Heart left ventricle (tissue), 16 donors: ENCODE measurements at regions of chr1 and their contacts with region 1.

Region 1: DNA sequence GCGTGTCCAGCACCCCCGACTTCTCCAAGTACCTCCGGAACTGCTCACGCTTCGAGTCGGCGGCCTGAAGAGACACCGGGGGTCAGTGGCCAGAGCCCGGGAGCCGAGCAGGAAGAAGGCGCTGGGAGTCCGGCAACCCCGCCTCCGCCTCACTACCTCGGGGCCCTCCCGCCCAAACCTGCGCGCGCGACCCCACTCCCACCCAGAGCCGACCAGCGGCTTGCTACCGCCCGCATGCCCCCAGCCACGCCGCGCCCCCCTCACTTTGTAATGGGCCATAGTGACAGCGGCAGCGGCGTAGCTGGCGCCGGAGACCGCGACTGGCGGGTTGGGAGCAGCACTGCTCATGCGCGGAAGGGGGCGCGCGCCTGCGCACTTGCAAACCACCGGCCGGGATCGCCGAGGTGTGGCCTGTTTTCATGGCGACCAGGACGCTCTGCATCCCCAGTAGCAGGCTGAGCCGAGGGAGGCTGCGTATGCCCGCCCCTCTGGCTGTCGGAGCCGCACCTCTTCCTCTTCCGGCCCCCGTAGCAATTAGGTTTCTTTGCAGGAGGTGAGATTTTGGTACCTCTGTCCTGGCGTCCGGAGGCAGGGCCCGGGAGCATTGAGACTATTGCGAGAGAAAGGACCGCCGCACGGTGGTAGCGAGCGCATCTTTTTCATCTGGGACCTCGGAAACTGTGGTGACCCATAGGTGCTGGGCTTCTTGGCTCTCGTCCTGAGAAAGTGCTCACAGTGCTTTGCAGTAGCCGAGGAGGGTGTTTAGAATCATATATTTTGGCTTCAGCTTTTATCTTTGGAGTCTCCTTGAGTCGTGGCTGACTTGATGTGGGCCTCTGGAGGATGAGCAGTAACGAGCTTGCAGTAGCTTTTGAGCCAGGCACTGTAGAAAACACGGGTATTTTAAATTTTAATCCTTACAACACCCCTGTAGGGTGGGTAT is at the start of gene MYCBP:
- DNase-seq: peak; percentile 96 to 98 (median 97)
- ATAC-seq: peak; percentile 98 to 100 (median 100)
- H3K4me3 ChIP-seq: peak within 1 kb of the TSS; percentile 37 to 96 (median 80)
- H3K27ac ChIP-seq: peak within 1 kb of the TSS; percentile 53 to 80 (median 72)
- H3K4me1 ChIP-seq: peaks cover 0 to 29% (median 21%) of the 10 kb centered on the region in 12 donors
- H3K27me3 ChIP-seq: no peaks in the 10 kb centered on the region
- CTCF ChIP-seq: peak in 5 of 12 donors; percentile 17 to 45 (median 24)
- POLR2A ChIP-seq: peak in 1 of 2 donors; percentile 80
- total RNA-seq, gene MYCBP: 4.8 to 26.2 (median 11.1) TPM

Region 2: GRCh38 chr1:38973659-38974424 is 100.5 kb after region 1 on chr1:
- intact Hi-C with region 1: no loop called
- DNase-seq: peak in 3 of 5 donors; percentile 19 to 35 (median 29)
- ATAC-seq: peak; percentile 28 to 85 (median 74)
- H3K4me3 ChIP-seq: no peak overlapping the region
- H3K27ac ChIP-seq: no peak overlapping the region
- H3K4me1 ChIP-seq: peaks cover 0 to 4% (median 0%) of the 10 kb centered on the region in 12 donors
- H3K27me3 ChIP-seq: no peaks in the 10 kb centered on the region
- CTCF ChIP-seq: no peak
- POLR2A ChIP-seq: no peak

Region 3: DNA sequence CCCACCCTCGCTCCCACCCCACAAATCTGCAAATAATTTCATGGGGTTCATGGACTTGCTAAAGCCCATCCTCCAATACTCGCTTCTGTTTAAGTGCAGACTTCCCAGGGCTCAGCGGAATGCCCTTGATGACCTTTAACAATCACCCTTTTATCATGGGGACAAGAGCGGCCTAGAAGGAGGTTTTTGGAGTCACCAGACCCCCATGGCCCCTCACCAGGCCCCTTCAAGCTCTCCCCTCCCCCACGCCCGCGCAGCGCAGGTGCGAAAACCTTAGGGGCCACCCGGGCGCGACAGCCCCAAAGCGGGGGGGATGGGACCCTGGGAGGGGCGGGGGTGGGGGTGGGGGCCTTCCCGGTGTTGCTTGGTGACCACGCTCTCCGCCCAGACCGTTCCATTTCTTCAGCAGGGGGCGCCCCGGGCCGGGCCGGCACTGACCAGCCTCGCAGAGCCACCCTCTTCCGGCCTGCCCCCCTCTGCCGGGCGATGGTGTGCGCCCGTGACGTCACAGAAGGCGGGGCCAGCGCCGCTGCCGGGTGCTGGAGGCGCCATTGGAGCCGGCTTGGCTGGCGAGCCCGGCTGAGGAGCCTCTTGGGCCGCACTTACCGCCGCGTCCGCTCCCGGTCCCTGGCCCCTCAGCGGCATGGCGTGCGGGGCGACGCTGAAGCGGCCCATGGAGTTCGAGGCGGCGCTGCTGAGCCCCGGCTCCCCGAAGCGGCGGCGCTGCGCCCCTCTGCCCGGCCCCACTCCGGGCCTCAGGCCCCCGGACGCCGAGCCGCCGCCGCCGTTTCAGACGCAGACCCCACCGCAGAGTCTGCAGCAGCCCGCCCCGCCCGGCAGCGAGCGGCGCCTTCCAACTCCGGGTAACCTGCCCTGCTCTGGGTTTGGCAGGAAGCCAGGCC is 117.7 kb after region 1 on chr1 and contains the start of gene AKIRIN1:
- intact Hi-C with region 1: loop called in 8 of 10 experiments (anchors 5 to 10 kb)
- DNase-seq: peak; percentile 98 to 100 (median 99)
- ATAC-seq: peak; percentile 97 to 99 (median 98)
- H3K4me3 ChIP-seq: peak within 1 kb of the TSS; percentile 69 to 100 (median 96)
- H3K27ac ChIP-seq: peak within 1 kb of the TSS; percentile 81 to 99 (median 94)
- H3K4me1 ChIP-seq: peaks cover 0 to 44% (median 23%) of the 10 kb centered on the region in 12 donors
- H3K27me3 ChIP-seq: no peaks in the 10 kb centered on the region
- CTCF ChIP-seq: peak in 9 of 12 donors; percentile 8 to 66 (median 37)
- POLR2A ChIP-seq: peak; percentile 94 to 98
- total RNA-seq, gene AKIRIN1: 42.5 to 68.1 (median 59.1) TPM

Region 4: GRCh38 chr1:39034114-39034654 is 160.9 kb after region 1 on chr1:
- intact Hi-C with region 1: no loop called
- DNase-seq: no peak
- ATAC-seq: no peak
- H3K4me3 ChIP-seq: peak overlapping the region in 2 of 12 donors; percentile 21 to 27
- H3K27ac ChIP-seq: peak overlapping the region in 3 of 12 donors; percentile 17 to 37 (median 26)
- H3K4me1 ChIP-seq: peaks cover 0 to 13% (median under 1%) of the 10 kb centered on the region in 12 donors
- H3K27me3 ChIP-seq: no peaks in the 10 kb centered on the region
- CTCF ChIP-seq: no peak
- POLR2A ChIP-seq: no peak